ENCODE measurements at regions of chr1 and their contacts with region 1.

Region 1: GRCh38 chr1:178031856-178032320 is 62.0 kb upstream of the RASAL2 start:
- DNase-seq: peak; percentile 83 to 92 (median 90)
- ATAC-seq: peak; percentile 92 to 100 (median 96)
- H3K4me3 ChIP-seq: no peak overlapping the region
- H3K27ac ChIP-seq: no peak overlapping the region
- H3K4me1 ChIP-seq: peaks cover 0 to 7% (median 0%) of the 10 kb centered on the region in 3 donors
- H3K27me3 ChIP-seq: no peaks in the 10 kb centered on the region
- CTCF ChIP-seq: peak; percentile 80 to 89 (median 85)

Region 2: GRCh38 chr1:178282949-178283367 is 251.1 kb after region 1 on chr1:
- intact Hi-C with region 1: loop called in 1 of 3 experiments (anchors 10 kb)
- DNase-seq: no peak
- ATAC-seq: peak in 3 of 4 donors; percentile 66 to 74 (median 70)
- H3K4me3 ChIP-seq: no peak overlapping the region
- H3K27ac ChIP-seq: no peak overlapping the region
- H3K4me1 ChIP-seq: no peaks in the 10 kb centered on the region
- H3K27me3 ChIP-seq: no peaks in the 10 kb centered on the region
- CTCF ChIP-seq: peak in 1 of 4 donors; percentile 33

Region 3: GRCh38 chr1:178501705-178502329 is 469.9 kb after region 1 on chr1:
- intact Hi-C with region 1: loop called in 1 of 3 experiments (anchors 10 kb)
- DNase-seq: peak; percentile 62 to 92 (median 81)
- ATAC-seq: peak; percentile 81 to 93 (median 88)
- H3K4me3 ChIP-seq: no peak overlapping the region
- H3K27ac ChIP-seq: no peak overlapping the region
- H3K4me1 ChIP-seq: no peaks in the 10 kb centered on the region
- H3K27me3 ChIP-seq: no peaks in the 10 kb centered on the region
- CTCF ChIP-seq: peak; percentile 87 to 95 (median 92)

Measured in pancreas (tissue), 10 donors.